Mucosa of descending colon (tissue), 3 donors: ENCODE measurements at regions of chr2 and their contacts with region 1.

Region 1: DNA sequence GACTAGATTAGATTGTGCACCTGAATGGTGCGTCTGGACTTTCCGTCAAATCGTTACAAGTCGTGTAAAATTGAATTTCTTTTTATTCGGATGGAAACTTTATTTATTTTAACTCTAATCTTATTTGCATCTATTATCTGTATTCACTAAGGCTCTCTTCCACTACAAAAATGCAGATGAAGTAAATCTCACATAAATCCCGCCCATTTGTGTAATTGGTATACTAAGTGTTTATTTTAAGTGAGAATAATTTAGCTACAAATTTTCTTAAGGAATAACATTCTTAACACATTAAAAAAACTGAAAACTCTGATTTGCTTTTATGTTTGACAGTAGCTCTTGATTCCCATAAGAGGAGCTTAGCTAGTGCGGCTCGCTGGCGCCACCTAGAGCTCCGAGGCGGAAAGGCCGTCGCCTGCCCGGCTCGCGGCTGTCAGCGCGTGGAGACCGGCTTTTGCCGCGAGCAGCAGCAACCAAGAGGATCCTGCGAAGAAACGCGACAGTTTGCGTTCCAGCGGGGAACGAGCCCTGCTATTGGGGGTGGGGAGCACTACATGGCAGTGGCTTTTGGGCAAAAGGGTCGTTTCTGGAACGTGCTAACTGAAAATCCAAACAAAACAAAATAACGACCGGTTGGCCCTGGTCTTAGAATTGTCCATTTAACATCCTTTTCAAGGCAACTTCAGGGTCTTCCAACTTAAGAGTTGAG is 6.7 kb downstream of the SP9 start:
- DNase-seq: peak; percentile 89 to 94 (median 93)
- ATAC-seq: peak; percentile 87
- H3K4me3 ChIP-seq: no peak overlapping the region
- H3K4me1 ChIP-seq: peaks cover 50% of the 10 kb centered on the region
- CTCF ChIP-seq: peak; percentile 98

Region 2: DNA sequence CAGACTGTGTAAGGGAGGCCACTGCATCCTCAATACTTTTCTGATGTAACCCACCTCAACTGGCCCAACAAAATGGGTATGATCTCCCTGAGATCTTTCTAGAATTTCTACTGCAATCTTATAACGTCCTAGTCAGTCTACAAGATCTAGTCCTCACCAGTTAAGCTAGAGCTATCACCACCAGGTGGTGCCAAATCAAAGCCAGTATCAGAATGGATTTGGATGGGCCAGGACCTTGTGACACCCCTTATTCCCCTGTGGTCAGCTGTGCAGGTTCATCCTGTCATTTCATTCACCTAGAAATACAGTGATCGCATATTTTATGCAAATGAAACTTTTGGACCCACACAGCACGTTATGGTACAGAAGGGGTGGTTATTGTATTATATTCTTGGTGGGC is 183.4 kb before region 1 on chr2:
- intact Hi-C with region 1: loop called in 1 of 2 experiments (anchors 5 kb)
- DNase-seq: peak in 1 of 3 donors; percentile 70
- ATAC-seq: peak; percentile 53
- H3K4me3 ChIP-seq: no peak overlapping the region
- H3K4me1 ChIP-seq: no peaks in the 10 kb centered on the region
- CTCF ChIP-seq: no peak

Region 3: GRCh38 chr2:174180165-174180724 is 161.2 kb before region 1 on chr2:
- intact Hi-C with region 1: no loop called
- DNase-seq: no peak
- ATAC-seq: no peak
- H3K4me3 ChIP-seq: no peak overlapping the region
- H3K4me1 ChIP-seq: no peaks in the 10 kb centered on the region
- CTCF ChIP-seq: no peak